H1 (cell line): ENCODE measurements at regions of chr3 and their contacts with region 1.

Region 1: GRCh38 chr3:81302045-81302444 is 459.4 kb downstream of the GBE1 start:
- DNase-seq: peak in 1 of 2 experiments; percentile 46
- H3K4me3 ChIP-seq: no peak overlapping the region
- H3K27ac ChIP-seq: no peak overlapping the region
- H3K4me1 ChIP-seq: no peaks in the 10 kb centered on the region
- H3K27me3 ChIP-seq: no peaks in the 10 kb centered on the region
- CTCF ChIP-seq: peak in 2 of 3 experiments; percentile 57 to 62; a peak in 3 of 4 replicates
- EP300 ChIP-seq: no peak
- POLR2A ChIP-seq: no peak
- RAD21 ChIP-seq: peak; percentile 69 to 70

Region 2: DNA sequence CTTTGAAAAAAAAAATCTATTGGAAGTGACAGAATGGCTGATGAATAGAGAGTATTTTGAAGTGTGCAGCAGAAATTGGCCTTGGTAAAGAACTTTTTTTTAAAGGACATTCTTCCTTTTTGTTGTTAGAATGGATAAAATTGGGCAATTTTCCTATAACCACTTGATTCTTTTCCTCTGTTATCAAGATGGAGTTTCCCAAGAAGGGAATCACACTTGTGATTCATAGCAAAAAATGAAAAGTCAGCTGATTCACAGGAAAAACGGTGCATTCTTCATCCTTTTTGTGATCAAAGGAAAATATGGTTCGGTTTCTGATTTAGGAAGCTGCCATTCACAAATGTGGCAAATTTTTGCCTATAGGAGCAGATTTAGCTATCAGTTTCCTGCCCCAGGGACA is 27.4 kb before region 1 on chr3:
- CTCF ChIA-PET with region 1: interaction called, 10 read pairs
- POLR2A ChIA-PET with region 1: no interaction called
- DNase-seq: no peak
- H3K4me3 ChIP-seq: no peak overlapping the region
- H3K27ac ChIP-seq: no peak overlapping the region
- H3K4me1 ChIP-seq: no peaks in the 10 kb centered on the region; a peak in 3 of 7 replicates
- H3K27me3 ChIP-seq: no peaks in the 10 kb centered on the region
- CTCF ChIP-seq: no peak
- EP300 ChIP-seq: no peak
- POLR2A ChIP-seq: no peak
- RAD21 ChIP-seq: no peak

Region 3: GRCh38 chr3:81289676-81290075 is 12.4 kb before region 1 on chr3:
- CTCF ChIA-PET with region 1: interaction called, 15 read pairs
- POLR2A ChIA-PET with region 1: no interaction called
- DNase-seq: no peak
- H3K4me3 ChIP-seq: no peak overlapping the region
- H3K27ac ChIP-seq: no peak overlapping the region
- H3K4me1 ChIP-seq: no peaks in the 10 kb centered on the region
- H3K27me3 ChIP-seq: no peaks in the 10 kb centered on the region
- CTCF ChIP-seq: no peak
- EP300 ChIP-seq: no peak
- POLR2A ChIP-seq: no peak
- RAD21 ChIP-seq: no peak

Region 4: GRCh38 chr3:81320862-81321261 is 18.8 kb after region 1 on chr3:
- CTCF ChIA-PET with region 1: interaction called, 12 read pairs
- POLR2A ChIA-PET with region 1: no interaction called
- DNase-seq: no peak
- H3K4me3 ChIP-seq: no peak overlapping the region
- H3K27ac ChIP-seq: no peak overlapping the region
- H3K4me1 ChIP-seq: no peaks in the 10 kb centered on the region
- H3K27me3 ChIP-seq: no peaks in the 10 kb centered on the region
- CTCF ChIP-seq: no peak
- EP300 ChIP-seq: no peak
- POLR2A ChIP-seq: no peak
- RAD21 ChIP-seq: no peak

Region 5: GRCh38 chr3:81326245-81326644 is 24.2 kb after region 1 on chr3:
- CTCF ChIA-PET with region 1: interaction called, 11 read pairs
- POLR2A ChIA-PET with region 1: no interaction called
- DNase-seq: no peak
- H3K4me3 ChIP-seq: no peak overlapping the region
- H3K27ac ChIP-seq: no peak overlapping the region
- H3K4me1 ChIP-seq: no peaks in the 10 kb centered on the region
- H3K27me3 ChIP-seq: no peaks in the 10 kb centered on the region
- CTCF ChIP-seq: no peak
- EP300 ChIP-seq: no peak
- POLR2A ChIP-seq: no peak
- RAD21 ChIP-seq: no peak

Region 6: GRCh38 chr3:81338676-81339555 is 36.9 kb after region 1 on chr3:
- CTCF ChIA-PET with region 1: interaction called, 29 read pairs
- POLR2A ChIA-PET with region 1: no interaction called
- DNase-seq: no peak
- H3K4me3 ChIP-seq: no peak overlapping the region
- H3K27ac ChIP-seq: no peak overlapping the region
- H3K4me1 ChIP-seq: no peaks in the 10 kb centered on the region
- H3K27me3 ChIP-seq: no peaks in the 10 kb centered on the region
- CTCF ChIP-seq: peak in 2 of 3 experiments; percentile 29 to 44; a peak in 2 of 4 replicates
- EP300 ChIP-seq: no peak
- POLR2A ChIP-seq: no peak
- RAD21 ChIP-seq: peak; percentile 46 to 55